ENCODE measurements at regions of chr5 and their contacts with region 1.

Region 1: DNA sequence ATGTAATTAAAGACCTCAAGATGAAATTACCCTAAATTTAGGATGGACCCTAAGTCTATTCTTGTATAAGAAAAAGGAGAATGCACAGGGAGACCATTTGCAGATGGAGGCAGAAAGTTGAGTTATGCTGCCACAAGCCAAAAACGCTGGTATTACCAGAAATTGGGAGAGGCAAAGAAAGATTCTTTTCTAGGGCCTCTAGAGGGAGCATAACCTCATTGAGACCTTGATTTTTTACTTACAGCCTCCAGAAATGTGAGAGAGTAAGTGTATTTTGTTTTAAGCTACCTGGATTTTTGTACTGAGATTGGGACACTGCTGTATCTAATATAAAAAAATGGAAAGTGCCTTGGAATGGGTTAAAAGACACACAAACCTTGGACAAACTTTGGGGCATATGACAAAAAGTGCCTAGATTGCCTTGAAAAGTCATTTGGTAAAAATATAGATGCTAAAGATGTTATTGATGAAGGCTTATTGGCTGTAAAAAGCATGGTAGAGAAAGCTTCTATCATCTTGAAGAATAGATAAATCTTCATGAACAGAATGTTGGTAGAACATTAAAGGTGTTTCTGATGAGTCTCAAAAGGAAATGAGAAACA is 174.7 kb upstream of the PRDM9 start:
- DNase-seq: peak; percentile 72
- ATAC-seq: peak; percentile 64
- H3K4me3 ChIP-seq: no peak overlapping the region
- H3K27ac ChIP-seq: no peak overlapping the region
- H3K4me1 ChIP-seq: peaks cover 9% of the 10 kb centered on the region
- H3K27me3 ChIP-seq: no peaks in the 10 kb centered on the region
- CTCF ChIP-seq: peak; percentile 83

Region 2: DNA sequence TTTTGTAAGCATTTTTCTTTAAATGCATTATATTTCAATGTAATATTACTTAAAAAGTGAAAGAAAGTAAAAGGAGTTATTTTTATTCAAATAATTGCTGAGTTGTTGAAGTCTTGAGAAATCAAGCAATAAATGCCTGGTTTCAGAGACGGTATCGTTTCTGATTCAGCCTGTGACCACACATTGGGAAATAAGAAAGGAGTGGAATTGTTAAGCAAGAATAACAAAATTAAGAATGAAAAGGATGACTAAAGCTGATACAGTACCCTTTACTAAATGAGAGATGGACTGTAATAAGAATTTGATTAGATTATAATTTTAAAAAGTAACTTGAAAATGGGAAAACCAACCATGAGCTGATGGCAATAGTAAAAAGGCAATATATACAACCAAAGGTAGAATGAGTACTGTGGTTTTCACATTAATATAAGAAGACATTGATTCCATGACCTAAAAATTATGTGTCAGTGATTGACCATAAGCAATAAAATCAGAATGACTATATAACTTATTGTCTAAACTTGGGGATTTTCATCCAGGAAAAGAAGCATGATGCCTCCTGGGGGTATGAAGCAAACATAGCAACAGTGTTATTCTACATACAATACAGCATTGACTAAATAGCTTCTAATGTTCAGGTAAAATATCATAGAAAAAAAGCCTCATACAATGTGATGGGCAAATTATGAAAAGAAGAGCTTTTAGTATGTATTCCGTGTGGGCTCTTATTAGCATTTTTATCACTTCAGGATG is 72.7 kb after region 1 on chr5:
- CTCF ChIA-PET with region 1: no interaction called
- POLR2A ChIA-PET with region 1: no interaction called
- intact Hi-C with region 1: loop called (anchors 1 kb)
- DNase-seq: peak; percentile 44
- ATAC-seq: no peak
- H3K4me3 ChIP-seq: no peak overlapping the region
- H3K27ac ChIP-seq: no peak overlapping the region
- H3K4me1 ChIP-seq: peaks cover 8% of the 10 kb centered on the region
- H3K27me3 ChIP-seq: no peaks in the 10 kb centered on the region
- CTCF ChIP-seq: peak; percentile 63